Activated CD4-positive, alpha-beta T cell treated with anti-CD3 and anti-CD28 coated beads for 36 hours (primary cell): ENCODE measurements at regions of chr14 and their contacts with region 1.

Region 1: DNA sequence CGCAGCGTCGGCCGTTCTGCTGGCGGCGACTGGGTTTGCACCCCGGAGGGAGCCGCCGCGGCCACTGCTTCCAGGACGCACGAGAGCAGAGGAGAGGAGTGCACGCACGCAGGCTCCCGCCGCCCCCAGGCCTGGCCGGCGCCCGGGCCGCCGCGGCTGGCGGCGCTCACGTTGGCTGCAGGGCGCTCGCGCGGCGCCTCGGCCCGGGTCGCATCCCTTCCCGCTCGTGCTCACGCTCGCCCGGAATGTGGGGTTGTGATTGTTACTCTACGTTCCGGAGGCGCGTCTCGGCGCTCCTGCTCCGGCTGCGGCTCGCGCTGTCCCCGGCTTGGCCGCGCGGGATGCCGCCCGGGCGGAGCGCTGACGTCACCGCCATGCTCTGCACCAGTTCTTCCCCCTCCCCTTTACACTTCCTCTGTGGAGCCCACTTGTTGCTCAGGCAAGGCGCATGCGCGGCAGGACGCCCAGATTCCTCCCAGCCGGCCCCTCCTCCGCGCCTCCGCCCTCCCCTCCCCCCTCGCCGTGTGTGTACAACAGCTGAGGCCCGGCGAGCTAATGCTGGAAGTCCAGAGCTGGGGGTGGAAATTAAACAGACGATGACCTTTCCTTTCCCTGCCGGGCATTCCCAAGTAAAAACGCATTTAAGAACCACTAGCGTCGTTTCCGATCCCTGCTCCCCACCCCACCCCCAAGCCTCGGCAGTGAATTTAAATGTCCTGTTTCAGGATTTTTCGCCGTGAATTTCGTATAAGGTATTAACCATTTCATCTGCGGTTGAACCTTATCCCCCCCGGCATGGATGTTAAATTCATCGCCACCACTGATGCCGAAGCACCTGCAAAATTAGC is at the start of gene IRF2BPL:
- DNase-seq: peak; percentile 97
- ATAC-seq: peak; percentile 67
- H3K4me3 Mint-ChIP-seq: peak within 1 kb of the TSS; percentile 88
- H3K27ac Mint-ChIP-seq: peak within 1 kb of the TSS; percentile 97
- H3K4me1 Mint-ChIP-seq: peaks cover 54% of the 10 kb centered on the region
- H3K27me3 Mint-ChIP-seq: no peaks in the 10 kb centered on the region
- total RNA-seq, gene IRF2BPL: 34.3 to 40.1 TPM

Region 2: DNA sequence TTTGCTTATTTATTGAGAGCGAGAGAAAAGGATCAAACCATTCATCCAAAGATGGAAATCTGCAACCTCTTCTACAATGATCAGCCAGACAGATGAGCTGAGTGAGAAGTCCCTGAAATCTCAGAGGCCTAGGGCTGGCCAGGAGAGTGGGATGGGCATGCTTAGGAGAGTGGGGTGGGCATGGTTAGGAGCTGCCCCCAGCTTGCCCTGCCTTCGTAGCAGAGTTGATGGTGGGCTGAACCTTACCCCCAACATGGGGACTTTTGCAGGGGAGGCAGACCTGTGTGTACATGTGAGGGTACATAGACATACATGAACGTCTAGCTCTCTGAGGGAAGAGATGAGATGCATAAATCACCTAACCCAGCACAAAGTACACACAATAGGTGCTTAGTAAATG is 748.4 kb before region 1 on chr14:
- CTCF ChIA-PET with region 1: no interaction called
- POLR2A ChIA-PET with region 1: no interaction called
- intact Hi-C with region 1: no loop called
- DNase-seq: no peak
- ATAC-seq: no peak
- H3K4me3 Mint-ChIP-seq: no peak overlapping the region
- H3K27ac Mint-ChIP-seq: no peak overlapping the region
- H3K4me1 Mint-ChIP-seq: no peaks in the 10 kb centered on the region
- H3K27me3 Mint-ChIP-seq: peaks cover 5% of the 10 kb centered on the region

Region 3: DNA sequence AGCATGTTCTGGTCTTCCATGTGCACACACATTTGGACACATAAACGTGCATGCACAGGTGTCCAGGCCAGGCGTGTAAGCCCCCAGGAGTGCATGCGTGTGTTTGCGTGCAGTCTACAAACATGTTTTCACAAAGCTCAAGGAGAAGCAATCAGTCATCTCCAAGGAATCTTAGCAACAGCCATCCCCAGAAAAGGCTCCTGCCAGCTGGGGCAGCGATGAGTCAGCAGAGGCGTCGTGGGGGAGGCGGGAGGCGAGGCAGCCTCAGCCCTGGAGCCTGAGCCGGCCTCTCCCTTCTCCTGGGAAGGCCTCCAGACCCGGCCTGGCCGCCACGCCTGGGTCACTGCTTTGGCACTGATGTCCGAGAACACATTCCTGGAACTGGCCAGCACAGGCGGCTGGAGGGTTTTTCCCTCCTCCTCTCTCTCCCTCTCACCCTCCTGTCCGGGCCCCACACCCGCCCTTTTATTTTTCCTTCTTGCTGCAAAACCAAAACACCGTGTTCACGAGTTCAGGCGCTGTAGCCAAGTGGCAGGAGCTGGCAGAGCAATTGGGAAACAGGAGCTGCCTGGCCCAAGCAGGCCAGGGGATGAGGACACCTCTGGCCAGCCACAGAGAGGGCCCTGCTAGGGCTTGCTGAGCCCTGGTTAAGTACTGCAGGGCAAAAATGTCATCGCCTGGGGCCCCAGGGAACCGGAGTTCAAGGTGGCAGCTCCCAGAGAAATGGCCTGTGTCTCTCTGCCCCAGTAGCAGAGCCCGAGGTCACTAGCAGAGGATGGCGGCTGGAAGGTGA is 109.7 kb before region 1 on chr14:
- CTCF ChIA-PET with region 1: interaction called, 13 read pairs
- POLR2A ChIA-PET with region 1: interaction called, 4 read pairs
- intact Hi-C with region 1: loop called in 1 of 2 experiments (anchors 10 kb)
- DNase-seq: peak; percentile 65
- ATAC-seq: no peak
- H3K4me3 Mint-ChIP-seq: no peak overlapping the region
- H3K27ac Mint-ChIP-seq: no peak overlapping the region
- H3K4me1 Mint-ChIP-seq: peaks cover 59% of the 10 kb centered on the region
- H3K27me3 Mint-ChIP-seq: no peaks in the 10 kb centered on the region

Region 4: DNA sequence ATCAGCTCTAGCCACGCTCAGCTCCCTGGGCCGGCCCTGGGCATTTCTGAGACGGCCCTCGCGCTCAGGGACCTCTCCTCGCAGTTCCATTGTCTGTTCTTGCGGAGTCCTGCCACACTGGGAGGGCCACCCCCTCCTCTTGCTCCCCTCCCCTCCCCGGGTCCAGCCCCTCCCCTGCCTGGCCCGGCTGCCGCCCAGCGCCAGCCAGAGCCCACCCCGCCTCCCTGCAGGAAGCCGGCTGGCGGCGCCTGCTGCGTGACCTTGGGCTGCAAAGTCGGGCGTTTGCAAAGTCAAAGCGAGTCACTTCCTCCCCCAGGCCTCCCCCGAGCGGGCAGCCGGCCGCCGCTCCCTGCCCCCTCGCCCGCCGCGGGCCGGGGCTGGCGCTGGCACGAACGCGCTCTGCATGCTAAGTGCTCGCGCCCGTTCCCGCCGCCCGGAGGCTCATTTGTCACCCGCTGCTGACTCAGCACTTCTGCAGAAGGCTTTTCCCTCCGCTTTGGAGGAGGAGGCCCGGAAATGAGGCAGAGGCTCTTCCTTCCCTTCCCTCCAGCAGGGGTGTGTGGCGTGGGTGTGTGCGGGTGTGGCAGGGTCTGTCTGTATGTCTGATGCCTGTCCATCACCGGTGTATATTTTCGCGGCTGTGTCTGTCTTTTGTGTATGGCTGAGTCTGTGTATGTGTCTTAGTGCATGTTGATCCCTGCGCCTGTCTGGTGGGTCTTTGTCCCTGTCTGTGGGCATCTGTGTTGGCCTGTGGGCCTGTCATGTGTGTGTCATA is 72.1 kb before region 1 on chr14:
- CTCF ChIA-PET with region 1: interaction called, 8 read pairs
- POLR2A ChIA-PET with region 1: interaction called, 12 read pairs
- intact Hi-C with region 1: loop called (anchors 1 kb)
- DNase-seq: peak; percentile 96
- ATAC-seq: peak; percentile 62
- H3K4me3 Mint-ChIP-seq: peak overlapping the region; percentile 71
- H3K27ac Mint-ChIP-seq: peak overlapping the region; percentile 91
- H3K4me1 Mint-ChIP-seq: peaks cover 81% of the 10 kb centered on the region
- H3K27me3 Mint-ChIP-seq: no peaks in the 10 kb centered on the region

Region 5: GRCh38 chr14:76977793-76978720 is 50.6 kb before region 1 on chr14:
- CTCF ChIA-PET with region 1: interaction called, 6 read pairs
- POLR2A ChIA-PET with region 1: interaction called, 6 read pairs
- intact Hi-C with region 1: loop called (anchors 1 to 2 kb)
- DNase-seq: peak; percentile 94
- ATAC-seq: peak; percentile 99
- H3K4me3 Mint-ChIP-seq: peak overlapping the region; percentile 53
- H3K27ac Mint-ChIP-seq: peak overlapping the region; percentile 92
- H3K4me1 Mint-ChIP-seq: peaks cover 26% of the 10 kb centered on the region
- H3K27me3 Mint-ChIP-seq: no peaks in the 10 kb centered on the region

Region 6: GRCh38 chr14:77053046-77053841 is 24.6 kb after region 1 on chr14:
- CTCF ChIA-PET with region 1: interaction called, 10 read pairs
- POLR2A ChIA-PET with region 1: no interaction called
- intact Hi-C with region 1: loop called in 1 of 2 experiments (anchors 1 kb)
- DNase-seq: peak; percentile 90
- ATAC-seq: peak; percentile 86
- H3K4me3 Mint-ChIP-seq: no peak overlapping the region
- H3K27ac Mint-ChIP-seq: peak overlapping the region; percentile 78
- H3K4me1 Mint-ChIP-seq: peaks cover 18% of the 10 kb centered on the region
- H3K27me3 Mint-ChIP-seq: no peaks in the 10 kb centered on the region

Region 7: DNA sequence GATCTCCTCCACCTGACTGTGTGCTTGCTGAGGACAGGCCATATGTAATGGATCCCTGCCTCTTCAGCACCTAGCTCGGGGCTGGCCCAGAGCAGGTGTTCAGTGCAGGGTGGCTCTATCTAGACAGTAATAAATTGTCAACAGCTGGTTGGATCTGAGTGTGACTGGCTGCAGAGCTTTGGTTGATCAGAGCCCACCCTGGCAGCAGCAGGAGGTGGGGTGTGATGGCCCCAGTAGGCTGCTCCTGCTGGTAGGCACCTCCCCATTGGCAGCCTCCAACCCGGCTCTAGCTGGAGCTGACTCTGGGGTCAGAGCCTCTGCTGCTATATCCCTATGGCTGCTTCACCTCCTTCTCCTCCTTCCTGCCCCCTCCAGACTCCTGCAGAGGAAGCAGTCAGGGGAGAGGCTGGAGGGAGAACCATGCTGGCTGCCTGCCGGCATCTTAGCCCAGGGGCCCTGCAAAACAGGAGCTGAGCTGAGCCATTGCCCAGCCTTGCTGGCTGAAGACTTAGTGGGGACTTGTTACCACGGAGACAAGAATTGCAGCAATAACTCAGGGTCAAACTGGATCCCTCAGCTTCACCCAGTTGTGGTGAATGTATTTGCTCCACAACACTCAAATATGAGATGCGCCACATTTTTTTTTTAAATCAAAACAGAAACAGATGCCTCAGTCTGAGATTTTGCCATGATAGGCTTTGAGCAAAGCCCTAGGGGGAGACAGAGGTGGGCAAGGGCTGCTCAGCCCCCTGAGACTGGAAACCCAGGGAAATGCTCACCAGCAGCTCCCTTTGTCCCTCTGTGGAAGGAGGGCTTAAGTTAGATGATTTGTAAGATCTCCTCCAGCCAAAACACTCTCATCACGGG is 175.2 kb after region 1 on chr14:
- CTCF ChIA-PET with region 1: no interaction called
- POLR2A ChIA-PET with region 1: no interaction called
- intact Hi-C with region 1: no loop called
- DNase-seq: no peak
- ATAC-seq: no peak
- H3K4me3 Mint-ChIP-seq: no peak overlapping the region
- H3K27ac Mint-ChIP-seq: no peak overlapping the region
- H3K4me1 Mint-ChIP-seq: no peaks in the 10 kb centered on the region
- H3K27me3 Mint-ChIP-seq: peaks cover 7% of the 10 kb centered on the region

Region 8: DNA sequence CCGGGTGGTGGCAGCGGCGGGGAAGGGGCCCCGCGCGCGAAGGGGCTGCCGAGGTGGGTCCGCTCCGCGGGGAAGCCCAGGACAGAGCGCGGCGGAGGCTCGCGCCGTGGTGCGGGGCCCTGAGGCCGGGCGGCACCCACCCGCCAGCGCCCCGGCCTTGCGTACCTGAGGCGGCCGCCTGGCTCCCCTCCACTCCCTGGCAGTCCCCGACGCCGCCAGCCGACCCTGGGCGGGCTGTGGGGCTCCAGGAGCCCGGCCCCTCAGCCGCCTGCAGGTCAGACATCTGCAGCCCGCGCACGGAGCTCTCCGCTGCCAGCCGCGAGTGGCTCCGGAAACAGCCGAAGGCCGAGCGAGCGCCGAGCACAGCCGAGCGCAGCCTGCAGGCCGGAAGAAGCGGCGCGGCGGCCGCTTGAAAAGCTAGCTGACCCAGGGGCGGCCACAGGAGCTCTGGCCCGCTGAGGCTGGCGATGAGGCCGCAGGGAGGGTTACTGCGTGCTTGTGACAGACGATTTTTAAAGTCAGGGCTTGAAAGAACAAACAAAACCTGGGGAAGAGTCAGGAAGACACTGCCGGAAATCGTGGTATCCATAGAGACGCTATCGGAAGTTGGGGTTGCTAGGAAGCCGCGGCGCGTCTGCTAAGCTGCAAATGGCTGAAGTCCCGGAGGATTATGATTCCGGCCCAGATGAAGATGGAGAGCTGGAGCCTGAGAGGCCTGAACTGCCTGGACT is 348.3 kb after region 1 on chr14 and contains the starts of genes SAMD15 and TMED8:
- CTCF ChIA-PET with region 1: no interaction called
- POLR2A ChIA-PET with region 1: no interaction called
- intact Hi-C with region 1: loop called in 1 of 2 experiments (anchors 10 kb)
- DNase-seq: peak; percentile 91
- ATAC-seq: peak; percentile 95
- H3K4me3 Mint-ChIP-seq: no peak within 1 kb of the TSS
- H3K27ac Mint-ChIP-seq: peak within 1 kb of the TSS; percentile 86
- H3K4me1 Mint-ChIP-seq: peaks cover 40% of the 10 kb centered on the region
- H3K27me3 Mint-ChIP-seq: no peaks in the 10 kb centered on the region
- total RNA-seq, gene SAMD15: 0.25 TPM
- total RNA-seq, gene TMED8: 25.3 to 27.9 TPM

Region 9: GRCh38 chr14:78967110-78967809 is 1938.7 kb after region 1 on chr14:
- CTCF ChIA-PET with region 1: no interaction called
- POLR2A ChIA-PET with region 1: no interaction called
- intact Hi-C with region 1: no loop called
- DNase-seq: no peak
- ATAC-seq: no peak
- H3K4me3 Mint-ChIP-seq: no peak overlapping the region
- H3K27ac Mint-ChIP-seq: no peak overlapping the region
- H3K4me1 Mint-ChIP-seq: no peaks in the 10 kb centered on the region
- H3K27me3 Mint-ChIP-seq: peaks cover 6% of the 10 kb centered on the region